Testis (tissue), 5 donors: ENCODE measurements at regions of chr10 and their contacts with region 1.

Region 1: DNA sequence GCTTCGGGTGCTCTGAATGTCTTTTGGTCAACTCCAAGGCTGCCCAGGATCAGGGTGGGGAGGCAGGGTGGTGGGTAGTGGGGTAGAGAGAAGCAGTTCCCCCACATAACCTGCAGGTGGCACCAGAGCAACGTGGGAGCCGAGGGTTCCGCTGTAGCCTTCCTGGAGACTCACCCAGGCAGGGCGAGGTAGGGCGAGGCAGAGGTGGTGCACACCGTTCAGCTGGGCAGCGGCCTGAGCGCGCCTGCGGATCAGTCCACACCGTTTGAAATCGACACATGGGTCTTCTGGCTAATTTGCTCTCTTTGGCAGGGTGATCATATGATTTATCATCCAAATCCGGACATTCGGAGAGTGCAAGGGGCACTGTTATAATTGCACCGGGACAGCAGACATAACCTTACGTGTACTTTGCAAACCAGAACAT is 41.4 kb upstream of the MAP3K8 start:
- DNase-seq: peak; percentile 81
- H3K4me3 ChIP-seq: peak overlapping the region in 1 of 2 donors; percentile 8
- H3K27ac ChIP-seq: no peak overlapping the region
- H3K4me1 ChIP-seq: no peaks in the 10 kb centered on the region
- H3K27me3 ChIP-seq: no peaks in the 10 kb centered on the region
- CTCF ChIP-seq: peak; percentile 68 to 88 (median 69)
- POLR2A ChIP-seq: no peak

Region 2: GRCh38 chr10:30534465-30535144 is 142.0 kb after region 1 on chr10:
- intact Hi-C with region 1: loop called (anchors 10 kb)
- DNase-seq: peak; percentile 89
- H3K4me3 ChIP-seq: no peak overlapping the region
- H3K27ac ChIP-seq: no peak overlapping the region
- H3K4me1 ChIP-seq: no peaks in the 10 kb centered on the region
- H3K27me3 ChIP-seq: no peaks in the 10 kb centered on the region
- CTCF ChIP-seq: peak; percentile 73 to 92 (median 88)
- POLR2A ChIP-seq: no peak